PC-3 (cell line): ENCODE measurements at regions of chr1 and their contacts with region 1.

Region 1: GRCh38 chr1:205309741-205310140 is 11.8 kb downstream of the NUAK2 start:
- DNase-seq: no peak
- ATAC-seq: no peak
- H3K4me3 ChIP-seq: no peak overlapping the region
- H3K27ac ChIP-seq: no peak overlapping the region
- H3K4me1 ChIP-seq: no peaks in the 10 kb centered on the region
- H3K27me3 ChIP-seq: no peaks in the 10 kb centered on the region
- CTCF ChIP-seq: no peak

Region 2: DNA sequence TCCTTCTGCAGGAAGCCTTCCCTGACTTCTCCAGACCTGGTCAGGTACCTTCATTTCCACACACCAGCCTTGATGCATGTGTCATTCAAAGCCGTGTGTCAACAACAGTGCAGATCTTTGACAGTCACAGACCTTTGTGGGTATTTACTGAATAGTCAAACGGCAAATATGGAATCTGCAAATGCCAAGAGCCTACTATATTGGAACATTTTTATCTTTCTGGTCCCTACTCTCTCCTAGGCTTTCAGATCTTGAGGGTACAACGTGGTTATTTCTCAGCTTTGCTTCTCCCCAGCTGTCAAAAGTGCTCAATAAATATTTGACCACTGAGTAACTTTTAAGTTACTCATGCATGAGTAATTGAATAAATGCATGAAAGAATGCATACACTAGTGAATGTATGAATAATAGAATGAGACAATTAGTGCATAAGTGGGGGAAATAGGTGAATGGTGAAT is 718.1 kb before region 1 on chr1:
- CTCF ChIA-PET with region 1: no interaction called
- POLR2A ChIA-PET with region 1: no interaction called
- intact Hi-C with region 1: no loop called
- DNase-seq: peak; percentile 99
- ATAC-seq: peak; percentile 85
- H3K4me3 ChIP-seq: no peak overlapping the region; the same call in 1 of the 2 replicates
- H3K27ac ChIP-seq: peak overlapping the region; percentile 78
- H3K4me1 ChIP-seq: peaks cover 35% of the 10 kb centered on the region
- H3K27me3 ChIP-seq: no peaks in the 10 kb centered on the region
- CTCF ChIP-seq: no peak

Region 3: GRCh38 chr1:205266611-205267305 is 43.0 kb before region 1 on chr1:
- CTCF ChIA-PET with region 1: no interaction called
- POLR2A ChIA-PET with region 1: interaction called, 11 read pairs
- intact Hi-C with region 1: no loop called
- DNase-seq: no peak
- ATAC-seq: no peak
- H3K4me3 ChIP-seq: no peak overlapping the region
- H3K27ac ChIP-seq: no peak overlapping the region
- H3K4me1 ChIP-seq: peaks cover 23% of the 10 kb centered on the region
- H3K27me3 ChIP-seq: no peaks in the 10 kb centered on the region
- CTCF ChIP-seq: no peak

Region 4: GRCh38 chr1:205279986-205280385 is 29.8 kb before region 1 on chr1:
- CTCF ChIA-PET with region 1: no interaction called
- POLR2A ChIA-PET with region 1: no interaction called
- intact Hi-C with region 1: no loop called
- DNase-seq: peak; percentile 43
- ATAC-seq: no peak
- H3K4me3 ChIP-seq: no peak overlapping the region
- H3K27ac ChIP-seq: no peak overlapping the region
- H3K4me1 ChIP-seq: peaks cover 16% of the 10 kb centered on the region
- H3K27me3 ChIP-seq: no peaks in the 10 kb centered on the region
- CTCF ChIP-seq: no peak

Region 5: DNA sequence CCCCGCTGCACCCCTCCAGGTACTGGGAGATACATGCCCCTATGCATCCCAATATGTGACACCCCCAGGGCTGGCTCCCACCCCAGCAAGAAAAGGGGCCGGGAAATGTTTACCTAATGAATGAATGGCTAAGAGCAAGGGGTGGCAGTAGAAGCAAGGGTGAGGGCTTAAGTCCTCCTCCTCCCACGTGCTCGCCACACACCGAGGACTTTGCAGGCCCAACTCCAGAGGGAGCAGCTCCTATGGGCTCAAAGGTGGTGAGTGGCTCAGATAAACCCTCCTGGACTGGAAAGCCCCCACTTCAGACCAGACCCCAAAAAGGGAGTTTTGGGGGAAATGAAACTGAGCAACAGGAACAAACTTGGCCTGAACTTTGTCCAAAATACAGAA is 359.2 kb after region 1 on chr1:
- CTCF ChIA-PET with region 1: no interaction called
- POLR2A ChIA-PET with region 1: no interaction called
- intact Hi-C with region 1: no loop called
- DNase-seq: no peak
- ATAC-seq: no peak
- H3K4me3 ChIP-seq: no peak overlapping the region
- H3K27ac ChIP-seq: no peak overlapping the region
- H3K4me1 ChIP-seq: peaks cover 72% of the 10 kb centered on the region
- H3K27me3 ChIP-seq: no peaks in the 10 kb centered on the region
- CTCF ChIP-seq: no peak